Posterior vena cava (tissue), 2 donors: ENCODE measurements at regions of chr2 and their contacts with region 1.

Region 1: DNA sequence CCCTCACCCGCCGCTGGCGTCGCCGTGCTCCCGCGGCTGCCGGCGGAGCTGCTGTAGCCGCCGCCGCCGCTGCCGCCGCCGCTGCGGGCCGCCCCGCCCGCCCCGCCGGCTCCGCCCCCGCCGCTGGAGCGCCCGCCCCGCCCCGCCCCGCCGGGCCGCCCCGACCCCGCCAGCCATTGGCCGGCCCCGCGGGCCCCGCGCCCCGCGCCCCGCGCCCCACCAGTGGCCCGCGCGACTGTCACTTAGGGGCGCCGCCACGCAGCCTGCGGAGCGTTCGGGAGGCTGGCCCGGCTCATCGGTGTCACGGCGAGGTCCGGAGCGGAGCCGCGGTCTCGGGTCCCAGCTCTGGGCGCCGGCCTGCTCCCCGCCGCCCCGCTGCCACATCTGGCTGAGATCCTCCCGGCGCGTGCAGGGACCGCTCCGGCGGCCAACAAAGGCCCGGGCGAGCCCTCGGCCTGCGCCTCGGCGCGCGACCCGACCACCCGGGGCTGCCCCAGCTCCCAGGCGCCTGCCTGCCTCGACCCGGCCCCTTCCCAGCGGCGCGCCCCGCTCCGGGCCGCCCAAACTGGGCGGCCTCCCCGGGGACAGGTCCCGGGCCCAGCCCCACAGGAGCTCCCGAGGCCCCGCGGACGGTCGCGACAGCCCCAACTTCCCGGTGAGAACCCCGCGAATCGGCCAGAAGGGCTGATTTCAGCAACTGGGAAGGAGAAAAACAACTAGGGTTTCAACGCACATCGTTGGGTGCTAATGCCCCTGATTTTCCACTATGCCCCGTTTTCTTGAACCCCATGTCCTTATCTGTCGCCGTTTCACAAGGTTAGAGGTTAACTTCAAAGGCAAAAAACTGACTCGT is at the start of gene MGAT4A:
- DNase-seq: peak; percentile 90
- total RNA-seq, gene MGAT4A: 34.2 to 36.2 TPM

Region 2: DNA sequence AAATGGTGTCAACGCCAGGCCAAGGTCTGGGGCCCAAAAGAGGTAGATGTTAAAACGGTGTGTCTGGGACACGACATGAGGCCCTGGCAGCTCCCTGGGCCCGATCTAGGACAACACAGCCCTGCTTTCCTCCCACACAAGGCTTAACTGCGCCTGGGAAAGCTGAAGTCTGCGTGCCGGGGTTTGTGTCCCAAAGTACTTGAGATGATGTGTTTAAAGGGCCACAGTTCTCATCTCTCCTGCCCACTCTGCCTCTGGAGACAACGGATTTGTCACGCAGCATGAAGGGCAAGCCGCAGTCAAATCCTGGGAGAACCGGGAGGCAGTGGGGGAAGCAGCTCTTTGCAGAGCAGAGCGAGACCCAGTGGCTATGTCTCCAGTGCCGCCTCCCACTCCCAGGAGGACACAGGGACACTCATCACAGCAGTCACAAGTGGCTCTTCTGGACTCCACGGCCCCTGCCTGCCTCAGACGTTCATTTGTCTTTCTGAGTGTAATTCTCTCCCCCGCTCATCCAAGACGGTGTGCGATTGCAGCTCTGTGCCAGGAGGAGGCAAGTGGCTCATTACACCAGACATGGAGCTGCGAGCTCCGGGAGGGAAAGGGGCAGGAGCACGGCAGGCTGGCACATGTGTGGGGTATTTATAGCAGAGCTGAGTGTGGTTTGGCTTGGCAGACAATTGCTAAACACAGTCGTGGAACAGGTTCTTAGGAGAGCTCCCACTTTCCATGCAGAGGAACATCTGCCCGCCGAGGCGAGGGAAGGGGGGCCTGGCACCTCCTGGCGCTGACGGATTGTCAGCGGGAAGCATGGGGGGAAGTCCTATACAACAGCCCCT is 1803.6 kb before region 1 on chr2:
- intact Hi-C with region 1: no loop called
- DNase-seq: peak; percentile 76

Region 3: DNA sequence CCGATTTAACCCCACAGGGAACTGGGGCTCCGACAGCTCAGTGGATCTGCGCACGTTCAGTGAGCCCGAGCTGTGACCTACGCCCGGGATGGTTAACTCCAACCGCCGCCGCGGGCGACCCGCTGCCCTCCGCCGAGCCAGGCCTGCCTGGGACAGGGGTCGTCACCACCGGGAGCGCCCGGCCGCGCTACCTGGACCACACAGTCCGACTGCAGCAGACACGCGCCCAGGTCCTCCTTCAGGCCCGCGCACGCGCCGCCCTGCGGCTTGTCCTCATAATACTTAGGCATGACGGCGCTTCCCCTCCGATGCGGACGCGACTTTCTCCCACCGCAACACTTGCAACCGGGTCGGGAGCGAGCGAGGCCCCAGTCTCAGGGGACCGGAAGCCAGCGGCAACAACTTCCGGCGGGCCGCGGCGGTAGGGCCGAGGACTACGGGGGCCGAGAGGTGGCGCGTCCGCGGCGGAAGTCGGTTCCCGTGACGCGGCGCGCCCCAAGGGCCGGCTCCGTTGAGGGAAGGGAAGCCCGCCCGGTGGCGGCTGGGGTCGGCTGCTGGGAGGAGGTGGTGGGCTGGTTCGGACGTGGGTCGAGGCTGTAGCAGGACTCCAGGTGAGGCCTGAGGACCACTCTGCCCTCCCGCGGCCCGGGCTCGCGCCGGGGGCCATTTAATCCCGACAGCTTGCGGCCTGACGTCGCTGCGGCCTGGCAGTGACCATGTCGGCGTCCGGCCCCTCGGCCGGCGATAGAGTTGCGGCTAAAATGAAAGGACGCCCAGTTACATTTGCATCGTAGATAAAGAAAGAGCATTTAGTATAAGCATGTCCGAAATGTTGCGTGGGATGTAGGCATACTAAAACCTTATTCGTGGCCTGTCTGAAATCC is 122.9 kb before region 1 on chr2 and contains the starts of genes COA5 and UNC50:
- intact Hi-C with region 1: no loop called
- DNase-seq: peak; percentile 98
- total RNA-seq, gene COA5: 19.5 to 25.5 TPM
- total RNA-seq, gene UNC50: 36.3 to 45.6 TPM

Region 4: GRCh38 chr2:98822301-98823164 is 91.3 kb after region 1 on chr2:
- intact Hi-C with region 1: loop called in 1 of 2 experiments (anchors 10 kb)
- DNase-seq: peak; percentile 87